ENCODE measurements at regions of chr17 and their contacts with region 1.

Region 1: DNA sequence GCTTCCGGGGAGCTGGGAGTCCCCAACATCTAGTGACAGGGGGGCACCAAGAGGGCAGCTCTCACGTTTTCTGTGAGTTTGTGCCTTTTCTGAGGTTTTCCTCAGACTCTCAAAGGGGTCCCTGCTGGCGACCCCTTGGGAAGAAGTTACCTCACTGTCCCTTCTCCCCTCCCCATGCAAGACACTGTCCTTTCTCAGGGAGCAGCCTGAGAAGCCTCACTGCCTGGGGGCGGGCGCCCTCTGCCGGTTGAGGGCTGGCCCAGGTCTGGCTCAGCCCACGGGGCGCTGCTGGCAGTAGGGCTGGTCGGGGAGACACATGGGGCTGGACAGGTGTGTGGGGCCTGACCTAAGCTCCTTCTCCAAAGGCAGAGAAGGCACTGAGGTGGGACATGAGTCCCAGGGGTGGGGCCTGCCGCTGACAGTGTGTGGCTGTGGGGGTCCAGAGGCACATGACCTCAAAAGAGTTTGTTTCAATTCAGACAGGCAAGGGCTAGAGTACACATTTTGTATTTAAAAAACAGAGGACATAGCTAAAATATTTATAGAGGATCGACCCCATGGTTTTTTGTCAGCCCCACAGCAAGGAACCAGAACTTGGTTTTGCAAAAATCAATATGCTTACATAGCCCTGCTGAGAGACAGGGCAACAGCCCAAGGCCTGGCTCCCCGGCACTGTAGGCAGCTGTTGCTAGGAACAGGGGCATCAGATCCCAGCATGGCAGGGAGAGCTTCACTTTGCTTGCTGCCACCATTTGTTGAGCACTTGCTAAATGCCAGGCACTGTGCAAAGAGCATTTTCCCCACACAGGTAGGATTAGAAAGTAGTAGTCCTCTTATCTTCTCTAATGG is 18.5 kb upstream of the ALDH3A1 start:
- DNase-seq: peak; percentile 89
- CTCF ChIP-seq: peak; percentile 99

Region 2: DNA sequence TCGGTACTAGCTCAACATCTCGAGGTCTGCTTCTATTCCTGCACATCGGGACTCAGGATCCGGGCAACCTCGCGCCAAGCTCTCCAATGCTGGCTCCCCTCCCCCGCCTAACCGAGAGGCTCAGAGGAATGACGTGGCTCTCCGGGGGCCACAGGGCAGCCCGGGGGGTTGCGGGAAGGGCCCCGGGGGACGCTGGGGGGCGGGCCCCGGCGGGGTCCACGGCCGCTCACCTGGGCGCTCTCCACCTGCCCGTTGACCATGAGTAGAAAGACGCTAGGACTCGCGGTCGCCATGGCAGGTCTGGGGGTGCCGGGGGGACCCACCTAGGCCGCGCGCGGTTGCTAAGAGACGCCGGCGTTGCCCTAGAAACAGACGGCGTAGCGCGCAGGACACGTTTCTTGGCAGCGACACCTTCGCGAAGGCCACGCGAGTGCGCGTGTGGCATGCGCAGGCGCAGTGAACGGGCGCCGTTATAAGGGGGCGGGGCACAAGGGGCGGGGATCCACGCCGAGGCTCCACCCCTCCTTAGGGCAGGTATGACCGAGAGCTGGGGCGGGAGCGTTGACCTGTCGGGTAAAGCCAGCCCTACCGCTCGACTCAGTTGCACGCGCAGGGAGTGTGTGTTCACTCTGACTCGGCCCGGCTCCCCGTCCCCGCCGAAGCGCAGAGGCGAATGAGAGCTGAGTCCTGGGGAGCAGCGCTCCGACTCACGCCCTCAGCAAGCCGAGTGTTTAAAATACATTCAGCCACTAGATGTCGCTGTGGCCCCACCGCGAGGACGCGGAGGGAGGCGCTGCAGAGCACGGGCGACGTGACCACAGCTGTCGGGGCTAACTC is 404.2 kb before region 1 on chr17 and contains the start of gene B9D1:
- in situ Hi-C with region 1: loop called (anchors 10 kb)
- DNase-seq: peak; percentile 99
- CTCF ChIP-seq: peak; percentile 99

Region 3: DNA sequence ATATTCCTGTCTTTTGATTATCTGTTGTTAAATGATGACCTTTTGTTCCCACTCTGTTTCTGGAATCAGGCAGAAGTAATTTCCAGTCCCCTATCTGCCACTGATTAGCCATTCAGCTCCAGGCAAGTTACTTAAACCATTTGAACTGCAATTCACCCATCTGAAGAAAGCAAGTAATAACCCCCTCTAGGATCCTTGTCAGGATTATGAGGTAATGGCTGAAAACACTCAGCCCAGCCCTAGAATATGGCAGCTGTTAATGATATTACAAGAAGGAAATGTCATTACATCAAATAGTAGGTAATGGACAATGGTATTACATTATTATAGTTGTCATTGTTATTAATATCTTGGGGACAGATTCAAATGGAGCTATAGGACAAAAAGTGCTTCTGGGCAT is 248.9 kb before region 1 on chr17:
- in situ Hi-C with region 1: loop called (anchors 5 kb)
- DNase-seq: no peak
- CTCF ChIP-seq: no peak

Measured in GM13976 (cell line).